MCF 10A (cell line): ENCODE measurements at regions of chr1 and their contacts with region 1.

Region 1: GRCh38 chr1:205354259-205354904 is 2.3 kb downstream of the KLHDC8A start:
- DNase-seq: peak; percentile 92
- H3K4me3 Mint-ChIP-seq: no peak overlapping the region
- H3K27ac Mint-ChIP-seq: no peak overlapping the region
- H3K4me1 Mint-ChIP-seq: peaks cover 13% of the 10 kb centered on the region
- H3K27me3 Mint-ChIP-seq: peaks cover 23% of the 10 kb centered on the region
- CTCF ChIP-seq: peak; percentile 91

Region 2: GRCh38 chr1:205273551-205273982 is 80.8 kb before region 1 on chr1:
- CTCF ChIA-PET with region 1: interaction called, 108 read pairs
- POLR2A ChIA-PET with region 1: interaction called, 4 read pairs
- intact Hi-C with region 1: no loop called
- DNase-seq: peak; percentile 93
- H3K4me3 Mint-ChIP-seq: no peak overlapping the region
- H3K27ac Mint-ChIP-seq: no peak overlapping the region
- H3K4me1 Mint-ChIP-seq: peaks cover 27% of the 10 kb centered on the region
- H3K27me3 Mint-ChIP-seq: peaks cover 9% of the 10 kb centered on the region
- CTCF ChIP-seq: peak; percentile 100

Region 3: GRCh38 chr1:205375835-205376545 is 21.6 kb after region 1 on chr1:
- CTCF ChIA-PET with region 1: interaction called, 241 read pairs
- POLR2A ChIA-PET with region 1: interaction called, 9 read pairs
- intact Hi-C with region 1: loop called (anchors 1 kb)
- DNase-seq: peak; percentile 90
- H3K4me3 Mint-ChIP-seq: no peak overlapping the region
- H3K27ac Mint-ChIP-seq: no peak overlapping the region
- H3K4me1 Mint-ChIP-seq: peaks cover 36% of the 10 kb centered on the region
- H3K27me3 Mint-ChIP-seq: no peaks in the 10 kb centered on the region
- CTCF ChIP-seq: no peak

Region 4: GRCh38 chr1:205396967-205397616 is 42.7 kb after region 1 on chr1:
- CTCF ChIA-PET with region 1: interaction called, 27 read pairs
- POLR2A ChIA-PET with region 1: interaction called, 3 read pairs
- intact Hi-C with region 1: loop called (anchors 1 kb)
- DNase-seq: peak; percentile 87
- H3K4me3 Mint-ChIP-seq: no peak overlapping the region
- H3K27ac Mint-ChIP-seq: no peak overlapping the region
- H3K4me1 Mint-ChIP-seq: peaks cover 4% of the 10 kb centered on the region
- H3K27me3 Mint-ChIP-seq: peaks cover 27% of the 10 kb centered on the region
- CTCF ChIP-seq: peak; percentile 99

Region 5: GRCh38 chr1:205422993-205423625 is 68.7 kb after region 1 on chr1:
- CTCF ChIA-PET with region 1: interaction called, 15 read pairs
- POLR2A ChIA-PET with region 1: no interaction called
- intact Hi-C with region 1: no loop called
- DNase-seq: no peak
- H3K4me3 Mint-ChIP-seq: no peak overlapping the region
- H3K27ac Mint-ChIP-seq: no peak overlapping the region
- H3K4me1 Mint-ChIP-seq: no peaks in the 10 kb centered on the region
- H3K27me3 Mint-ChIP-seq: peaks cover 67% of the 10 kb centered on the region
- CTCF ChIP-seq: peak; percentile 49

Region 6: GRCh38 chr1:205477759-205478247 is 123.4 kb after region 1 on chr1:
- CTCF ChIA-PET with region 1: interaction called, 393 read pairs
- POLR2A ChIA-PET with region 1: interaction called, 24 read pairs
- intact Hi-C with region 1: no loop called
- DNase-seq: peak; percentile 100
- H3K4me3 Mint-ChIP-seq: no peak overlapping the region
- H3K27ac Mint-ChIP-seq: peak overlapping the region; percentile 33
- H3K4me1 Mint-ChIP-seq: peaks cover 15% of the 10 kb centered on the region
- H3K27me3 Mint-ChIP-seq: peaks cover 40% of the 10 kb centered on the region
- CTCF ChIP-seq: no peak

Region 7: DNA sequence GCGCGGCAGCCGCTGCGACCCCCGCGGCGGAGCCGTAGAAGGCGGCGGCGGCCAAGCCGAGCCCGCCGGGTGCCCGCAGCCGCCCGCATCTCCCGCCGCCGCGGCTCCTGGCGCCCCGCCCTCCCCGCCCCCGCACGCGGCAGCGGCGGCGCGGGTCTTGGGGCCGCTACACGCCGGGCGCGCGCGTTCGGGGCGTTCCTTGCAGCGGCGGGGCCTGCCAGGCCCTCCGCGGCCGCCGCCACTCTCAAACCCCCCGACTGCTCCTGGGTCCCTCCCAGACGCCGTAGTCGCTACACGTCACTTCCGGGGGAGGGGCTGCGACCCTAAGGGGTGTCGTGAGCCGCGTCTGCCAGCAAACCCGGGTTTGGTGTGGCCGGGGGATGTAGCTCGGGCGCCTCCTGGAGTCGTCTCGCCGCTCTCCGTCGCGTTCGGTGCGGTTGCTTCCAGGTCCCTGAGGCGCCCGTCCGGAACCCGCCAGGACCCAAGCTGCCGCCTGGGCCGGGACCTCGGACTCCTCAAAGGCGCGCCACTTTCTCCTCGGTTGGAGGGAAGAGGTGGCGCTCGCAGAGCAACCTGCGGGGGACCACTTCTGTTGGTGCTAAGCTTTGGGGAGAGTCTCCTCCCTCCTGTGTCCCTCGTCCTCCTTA is 277.5 kb after region 1 on chr1 and contains the start of gene ELK4:
- CTCF ChIA-PET with region 1: no interaction called
- POLR2A ChIA-PET with region 1: no interaction called
- intact Hi-C with region 1: no loop called
- DNase-seq: peak; percentile 100
- H3K4me3 Mint-ChIP-seq: peak within 1 kb of the TSS; percentile 90
- H3K27ac Mint-ChIP-seq: peak within 1 kb of the TSS; percentile 91
- H3K4me1 Mint-ChIP-seq: peaks cover 35% of the 10 kb centered on the region
- H3K27me3 Mint-ChIP-seq: no peaks in the 10 kb centered on the region
- CTCF ChIP-seq: peak; percentile 87
- total RNA-seq, gene ELK4: 101 and 109 TPM in 2 replicates

Region 8: GRCh38 chr1:205711104-205712020 is 357.0 kb after region 1 on chr1:
- CTCF ChIA-PET with region 1: no interaction called
- POLR2A ChIA-PET with region 1: no interaction called
- intact Hi-C with region 1: no loop called
- DNase-seq: peak; percentile 93
- H3K4me3 Mint-ChIP-seq: no peak overlapping the region
- H3K27ac Mint-ChIP-seq: no peak overlapping the region
- H3K4me1 Mint-ChIP-seq: peaks cover 30% of the 10 kb centered on the region
- H3K27me3 Mint-ChIP-seq: no peaks in the 10 kb centered on the region
- CTCF ChIP-seq: peak; percentile 97